Stomach (tissue), 19 donors: ENCODE measurements at regions of chr7 and their contacts with region 1.

Region 1: GRCh38 chr7:47818796-47819606 is 129.3 kb downstream of the PKD1L1 start:
- DNase-seq: peak; percentile 72 to 92
- H3K4me3 ChIP-seq: no peak overlapping the region
- H3K27ac ChIP-seq: no peak overlapping the region
- H3K4me1 ChIP-seq: peaks cover 0 to 5% (median 0%) of the 10 kb centered on the region in 4 donors
- H3K27me3 ChIP-seq: no peaks in the 10 kb centered on the region
- CTCF ChIP-seq: peak in 5 of 7 experiments; percentile 88 to 93 (median 90)
- EP300 ChIP-seq: no peak
- POLR2A ChIP-seq: no peak

Region 2: GRCh38 chr7:47273974-47274766 is 544.8 kb before region 1 on chr7:
- intact Hi-C with region 1: loop called (anchors 5 kb)
- DNase-seq: no peak
- H3K4me3 ChIP-seq: no peak overlapping the region
- H3K27ac ChIP-seq: no peak overlapping the region
- H3K4me1 ChIP-seq: no peaks in the 10 kb centered on the region
- H3K27me3 ChIP-seq: no peaks in the 10 kb centered on the region
- CTCF ChIP-seq: no peak
- EP300 ChIP-seq: no peak
- POLR2A ChIP-seq: no peak